Naive thymus-derived CD4-positive, alpha-beta T cell (primary cell): ENCODE measurements at regions of chr12 and their contacts with region 1.

Region 1: GRCh38 chr12:56258057-56258819 is at the start of gene ANKRD52:
- DNase-seq: peak; percentile 69 to 92 (median 84)
- ATAC-seq: peak; percentile 99
- H3K4me3 ChIP-seq: peak within 1 kb of the TSS; percentile 99
- H3K4me3 Mint-ChIP-seq: peak within 1 kb of the TSS; percentile 87 to 97 (median 93)
- H3K27ac ChIP-seq: peak within 1 kb of the TSS; percentile 90
- H3K27ac Mint-ChIP-seq: peak within 1 kb of the TSS; percentile 83 to 94 (median 90)
- H3K4me1 ChIP-seq: peaks cover 18 to 19% of the 10 kb centered on the region in 2 donors
- H3K4me1 Mint-ChIP-seq: peaks cover 13 to 27% (median 22%) of the 10 kb centered on the region in 7 donors
- H3K27me3 ChIP-seq: no peaks in the 10 kb centered on the region
- H3K27me3 Mint-ChIP-seq: peaks cover 0 to 2% (median 0%) of the 10 kb centered on the region in 5 donors
- total RNA-seq, gene ANKRD52: 26.9 to 64.4 (median 40.7) TPM

Region 2: GRCh38 chr12:56206457-56207166 is 51.6 kb before region 1 on chr12:
- CTCF ChIA-PET with region 1: no interaction called
- POLR2A ChIA-PET with region 1: no interaction called
- intact Hi-C with region 1: loop called in 1 of 2 experiments (anchors 5 kb)
- DNase-seq: peak in 5 of 9 donors; percentile 13 to 37 (median 29)
- ATAC-seq: peak; percentile 70
- H3K4me3 ChIP-seq: no peak overlapping the region
- H3K4me3 Mint-ChIP-seq: no peak overlapping the region
- H3K27ac ChIP-seq: no peak overlapping the region
- H3K27ac Mint-ChIP-seq: peak overlapping the region in 6 of 9 donors; percentile 6 to 74 (median 33)
- H3K4me1 ChIP-seq: no peaks in the 10 kb centered on the region
- H3K4me1 Mint-ChIP-seq: peaks cover 0 to 9% (median 6%) of the 10 kb centered on the region in 7 donors
- H3K27me3 ChIP-seq: no peaks in the 10 kb centered on the region
- H3K27me3 Mint-ChIP-seq: no peaks in the 10 kb centered on the region

Region 3: DNA sequence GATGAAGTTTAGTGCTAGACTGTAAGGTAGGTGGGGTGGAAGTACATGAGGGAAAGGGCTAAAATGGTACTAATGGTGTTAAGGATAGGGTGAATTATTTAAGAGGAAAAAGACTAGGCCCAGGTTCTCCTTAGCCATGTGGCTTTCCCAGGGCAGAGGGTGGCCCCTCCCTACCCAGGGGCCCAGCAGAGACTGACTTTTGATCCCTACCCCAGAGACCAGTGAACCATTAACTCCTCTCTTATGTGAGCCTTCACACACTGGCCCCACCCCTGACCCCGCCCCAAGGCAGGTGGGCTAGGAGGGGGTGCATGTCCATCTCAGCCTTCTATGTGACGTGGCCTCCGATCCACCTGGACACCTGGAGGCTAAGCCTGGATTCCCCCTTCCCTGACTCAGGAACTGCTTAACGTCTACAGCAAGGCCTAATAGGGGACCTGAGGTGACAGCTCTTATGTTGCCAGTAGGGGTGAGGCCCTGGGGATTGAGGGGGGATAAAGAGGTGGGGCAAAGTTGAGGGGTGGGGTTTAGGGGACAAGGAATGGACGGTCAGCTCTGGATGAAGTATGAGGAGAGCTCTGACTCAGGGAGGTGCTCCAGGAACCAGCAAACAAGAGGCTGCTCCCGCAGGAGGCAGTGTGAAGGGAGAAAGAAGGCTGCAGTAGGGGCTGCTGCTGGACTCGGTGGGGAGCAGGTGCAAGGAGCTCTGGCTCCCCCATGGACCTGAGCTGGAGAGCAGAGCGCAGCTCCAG is 27.6 kb before region 1 on chr12:
- CTCF ChIA-PET with region 1: no interaction called
- POLR2A ChIA-PET with region 1: no interaction called
- intact Hi-C with region 1: no loop called
- DNase-seq: no peak
- ATAC-seq: no peak
- H3K4me3 ChIP-seq: no peak overlapping the region
- H3K4me3 Mint-ChIP-seq: no peak overlapping the region
- H3K27ac ChIP-seq: no peak overlapping the region
- H3K27ac Mint-ChIP-seq: no peak overlapping the region
- H3K4me1 ChIP-seq: no peaks in the 10 kb centered on the region
- H3K4me1 Mint-ChIP-seq: peaks cover 0 to 5% (median under 1%) of the 10 kb centered on the region in 7 donors
- H3K27me3 ChIP-seq: no peaks in the 10 kb centered on the region
- H3K27me3 Mint-ChIP-seq: no peaks in the 10 kb centered on the region

Region 4: DNA sequence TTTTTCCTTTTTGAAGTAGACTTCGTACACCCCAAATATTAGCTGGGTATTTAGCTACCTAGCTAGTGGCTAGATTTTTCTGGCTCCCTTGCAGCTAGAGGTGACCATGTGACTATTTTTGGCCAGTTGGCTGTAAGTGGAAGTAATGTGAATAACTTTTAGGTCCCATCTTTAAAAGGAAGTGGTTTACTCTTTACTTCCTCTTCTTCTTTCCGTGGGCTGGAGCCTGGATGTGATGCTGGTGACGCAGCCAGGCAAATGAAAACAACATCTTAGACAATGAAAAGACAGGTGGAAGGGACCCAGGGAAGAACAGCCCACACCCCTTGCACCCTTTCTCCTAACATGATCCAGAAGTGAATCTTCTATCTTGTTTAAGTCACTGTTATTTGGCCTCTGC is 1928.7 kb after region 1 on chr12:
- CTCF ChIA-PET with region 1: no interaction called
- POLR2A ChIA-PET with region 1: no interaction called
- intact Hi-C with region 1: no loop called
- DNase-seq: no peak
- ATAC-seq: no peak
- H3K4me3 ChIP-seq: no peak overlapping the region
- H3K4me3 Mint-ChIP-seq: no peak overlapping the region
- H3K27ac ChIP-seq: no peak overlapping the region
- H3K27ac Mint-ChIP-seq: no peak overlapping the region
- H3K4me1 ChIP-seq: no peaks in the 10 kb centered on the region
- H3K4me1 Mint-ChIP-seq: no peaks in the 10 kb centered on the region
- H3K27me3 ChIP-seq: no peaks in the 10 kb centered on the region
- H3K27me3 Mint-ChIP-seq: peaks cover 0 to 23% (median 7%) of the 10 kb centered on the region in 5 donors